Mammary epithelial cell (primary cell): ENCODE measurements at regions of chr5 and their contacts with region 1.

Region 1: GRCh38 chr5:150449517-150450339 is at the start of gene RPS14:
- DNase-seq: peak; percentile 94
- H3K4me3 ChIP-seq: peak within 1 kb of the TSS; percentile 79 to 86 (median 79)
- H3K27ac ChIP-seq: peak within 1 kb of the TSS; percentile 88
- H3K4me1 ChIP-seq: peaks cover 17% of the 10 kb centered on the region
- H3K27me3 ChIP-seq: no peaks in the 10 kb centered on the region
- CTCF ChIP-seq: peak; percentile 80 to 86
- total RNA-seq, gene RPS14: 1,819 to 2,158 TPM

Region 2: DNA sequence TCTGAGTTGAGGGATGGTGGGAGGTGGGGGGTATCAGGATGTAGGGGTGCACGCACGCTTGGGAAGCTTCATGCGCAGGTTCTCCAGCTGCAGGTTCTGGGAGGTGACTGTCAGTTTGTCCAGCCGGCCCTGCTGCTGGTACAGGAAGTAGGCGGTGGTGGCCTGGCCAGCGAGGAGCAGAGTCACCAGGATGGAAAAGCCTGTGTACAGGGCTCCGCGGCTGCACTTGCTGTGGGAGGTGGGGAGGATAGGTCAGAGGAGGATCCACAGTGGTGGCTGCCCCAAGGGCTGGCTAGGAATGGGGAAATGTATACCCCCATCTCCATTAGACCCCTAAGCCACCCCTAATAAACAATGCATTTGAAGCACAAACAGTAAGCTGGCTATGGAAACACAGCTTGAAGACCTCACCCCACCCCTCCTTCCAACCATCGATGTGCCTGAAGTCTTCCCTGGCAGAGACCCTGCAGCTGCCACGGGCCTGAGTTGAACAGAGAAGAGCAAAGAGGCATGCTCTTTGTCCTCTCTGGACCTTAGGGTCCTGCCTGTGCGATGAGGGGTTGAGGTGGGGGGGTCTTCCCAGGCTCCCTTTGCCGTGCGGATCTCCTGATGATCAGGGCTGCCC is 42.5 kb before region 1 on chr5:
- CTCF ChIA-PET with region 1: no interaction called
- dilution Hi-C with region 1: no loop called
- in situ Hi-C with region 1: no loop called
- intact Hi-C with region 1: no loop called
- DNase-seq: no peak
- H3K4me3 ChIP-seq: no peak overlapping the region
- H3K27ac ChIP-seq: no peak overlapping the region
- H3K4me1 ChIP-seq: no peaks in the 10 kb centered on the region
- H3K27me3 ChIP-seq: no peaks in the 10 kb centered on the region
- CTCF ChIP-seq: no peak

Region 3: DNA sequence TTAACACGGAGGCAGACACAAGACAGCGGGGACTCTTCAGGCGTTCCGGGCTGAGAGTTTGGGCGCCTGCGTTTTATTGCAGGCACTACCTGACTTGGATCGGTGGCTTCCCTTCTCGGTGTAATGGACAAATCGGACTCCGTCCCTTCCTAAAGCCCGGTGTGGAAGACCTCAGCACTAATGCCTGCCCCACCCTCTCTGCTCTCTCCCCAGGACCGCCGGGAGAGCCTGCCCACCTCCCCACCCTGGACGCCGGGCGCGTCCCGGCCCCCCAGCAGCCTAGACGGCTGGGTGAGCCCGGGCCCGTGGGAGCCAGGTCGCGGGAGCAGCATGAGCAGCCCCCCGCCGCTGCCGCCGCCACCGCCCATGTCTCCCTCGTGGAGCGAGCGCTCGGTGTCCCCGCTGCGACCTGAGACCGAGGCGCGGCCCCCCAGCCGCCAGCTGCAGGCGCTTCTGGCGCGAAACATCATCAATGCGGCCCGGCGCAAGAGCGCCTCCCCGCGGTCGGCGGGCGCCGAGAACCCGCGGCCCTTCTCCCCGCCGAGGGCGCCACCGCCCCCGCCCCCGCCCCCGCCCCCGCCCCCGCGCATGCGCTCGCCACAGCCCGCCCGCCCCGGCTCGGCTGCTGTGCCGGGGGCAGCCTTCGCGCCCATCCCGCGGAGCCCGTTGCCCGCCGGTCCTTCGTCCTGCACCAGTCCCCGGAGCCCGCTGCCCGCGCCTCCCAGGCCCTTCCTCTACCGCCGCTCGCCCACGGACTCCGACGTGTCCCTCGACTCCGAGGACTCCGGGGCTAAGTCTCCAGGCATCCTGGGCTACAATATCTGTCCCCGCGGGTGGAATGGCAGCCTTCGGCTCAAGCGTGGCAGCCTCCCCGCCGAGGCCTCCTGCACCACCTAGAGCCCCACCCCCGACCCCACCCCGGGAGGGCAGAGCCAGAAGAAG is 206.7 kb after region 1 on chr5:
- CTCF ChIA-PET with region 1: no interaction called
- dilution Hi-C with region 1: no loop called
- in situ Hi-C with region 1: loop called (anchors 25 kb)
- intact Hi-C with region 1: no loop called
- DNase-seq: no peak
- H3K4me3 ChIP-seq: peak overlapping the region; percentile 44 to 58 (median 54)
- H3K27ac ChIP-seq: no peak overlapping the region
- H3K4me1 ChIP-seq: no peaks in the 10 kb centered on the region
- H3K27me3 ChIP-seq: no peaks in the 10 kb centered on the region
- CTCF ChIP-seq: peak; percentile 38 to 62